ENCODE measurements at regions of chr9 and their contacts with region 1.

Region 1: GRCh38 chr9:27154908-27155307 is 45.9 kb downstream of the TEK start:
- DNase-seq: no peak
- H3K4me3 ChIP-seq: no peak overlapping the region
- H3K4me1 ChIP-seq: no peaks in the 10 kb centered on the region
- H3K27me3 ChIP-seq: no peaks in the 10 kb centered on the region

Region 2: GRCh38 chr9:26975693-26976059 is 179.2 kb before region 1 on chr9:
- in situ Hi-C with region 1: no loop called
- DNase-seq: peak in 1 of 2 experiments; percentile 18
- H3K4me3 ChIP-seq: no peak overlapping the region
- H3K4me1 ChIP-seq: peaks cover 3% of the 10 kb centered on the region; the same call in 1 of the 2 replicates
- H3K27me3 ChIP-seq: no peaks in the 10 kb centered on the region

Region 3: DNA sequence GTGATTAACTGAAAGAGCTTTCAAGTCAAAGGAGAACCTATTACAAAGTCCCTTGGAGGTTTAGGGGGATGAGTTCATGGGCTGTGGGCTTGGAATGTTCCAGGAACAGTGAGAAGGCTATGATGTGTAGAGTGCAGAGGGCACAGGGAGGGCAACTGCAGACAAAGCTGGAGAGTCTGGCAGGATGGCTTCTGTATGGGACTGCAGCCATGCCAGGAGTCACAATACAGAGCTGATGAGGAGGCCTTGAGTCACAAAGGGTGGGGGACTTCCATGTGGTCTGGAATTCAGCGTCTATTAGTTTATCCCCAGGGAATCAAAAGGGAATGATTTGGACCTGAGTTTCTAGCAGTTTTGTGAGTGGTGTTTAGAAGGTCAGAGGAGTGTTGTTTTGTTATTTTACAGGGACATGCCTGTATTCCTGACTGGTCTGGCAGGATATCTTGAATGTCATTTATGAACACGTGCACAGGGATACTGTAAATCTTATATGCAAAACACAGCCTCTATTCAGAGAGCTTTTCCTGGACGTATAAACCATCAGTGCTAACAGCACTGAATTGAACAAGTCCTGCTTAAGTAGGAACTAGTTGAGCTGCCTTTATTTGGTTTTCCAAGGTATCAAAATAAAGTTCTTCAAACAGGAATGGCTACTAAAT is 60.1 kb before region 1 on chr9:
- in situ Hi-C with region 1: loop called (anchors 10 kb)
- DNase-seq: no peak
- H3K4me3 ChIP-seq: no peak overlapping the region
- H3K4me1 ChIP-seq: no peaks in the 10 kb centered on the region
- H3K27me3 ChIP-seq: no peaks in the 10 kb centered on the region